Pancreas (tissue), 10 donors: ENCODE measurements at regions of chr13 and their contacts with region 1.

Region 1: DNA sequence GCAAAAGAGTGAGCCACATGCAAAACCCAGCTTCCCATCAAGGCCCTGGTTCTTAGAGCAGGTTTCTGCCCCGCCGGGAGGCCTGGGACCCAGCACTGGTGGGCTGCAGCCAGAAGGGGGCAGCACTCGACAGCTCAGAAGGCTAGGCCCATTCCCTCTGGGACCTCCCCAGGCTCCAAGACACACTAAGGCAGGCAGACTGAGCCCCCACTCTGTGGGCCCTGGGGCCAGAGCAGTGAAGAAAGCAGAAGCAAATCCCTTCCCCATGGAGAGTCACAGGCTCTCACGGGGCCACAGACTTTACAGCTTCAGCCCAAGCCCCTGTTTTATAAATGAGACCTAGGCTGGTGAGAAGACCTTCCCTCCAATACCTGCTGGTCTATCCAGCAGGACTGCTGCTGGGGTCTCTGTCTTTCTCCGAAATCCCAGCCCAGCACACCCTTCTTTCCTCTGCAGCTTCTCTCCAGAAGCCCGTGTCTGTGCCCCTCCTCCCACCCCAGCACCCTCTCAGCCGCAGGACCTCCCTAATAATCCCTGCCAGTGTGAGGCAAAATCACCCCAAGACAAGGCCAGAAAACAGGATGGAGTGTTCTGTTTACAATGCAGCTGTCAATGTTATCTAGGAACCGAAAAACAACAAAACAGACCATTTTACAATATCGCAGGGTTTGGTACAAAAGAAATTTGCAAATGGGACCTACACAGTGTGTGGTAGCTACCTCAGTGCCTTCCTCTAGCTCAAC is 109.3 kb downstream of the ABCC4 start:
- DNase-seq: peak; percentile 30 to 88 (median 72)
- ATAC-seq: peak; percentile 57 to 87 (median 82)
- H3K4me3 ChIP-seq: no peak overlapping the region
- H3K27ac ChIP-seq: no peak overlapping the region
- H3K4me1 ChIP-seq: no peaks in the 10 kb centered on the region
- H3K27me3 ChIP-seq: no peaks in the 10 kb centered on the region
- CTCF ChIP-seq: peak; percentile 47 to 88 (median 71)

Region 2: DNA sequence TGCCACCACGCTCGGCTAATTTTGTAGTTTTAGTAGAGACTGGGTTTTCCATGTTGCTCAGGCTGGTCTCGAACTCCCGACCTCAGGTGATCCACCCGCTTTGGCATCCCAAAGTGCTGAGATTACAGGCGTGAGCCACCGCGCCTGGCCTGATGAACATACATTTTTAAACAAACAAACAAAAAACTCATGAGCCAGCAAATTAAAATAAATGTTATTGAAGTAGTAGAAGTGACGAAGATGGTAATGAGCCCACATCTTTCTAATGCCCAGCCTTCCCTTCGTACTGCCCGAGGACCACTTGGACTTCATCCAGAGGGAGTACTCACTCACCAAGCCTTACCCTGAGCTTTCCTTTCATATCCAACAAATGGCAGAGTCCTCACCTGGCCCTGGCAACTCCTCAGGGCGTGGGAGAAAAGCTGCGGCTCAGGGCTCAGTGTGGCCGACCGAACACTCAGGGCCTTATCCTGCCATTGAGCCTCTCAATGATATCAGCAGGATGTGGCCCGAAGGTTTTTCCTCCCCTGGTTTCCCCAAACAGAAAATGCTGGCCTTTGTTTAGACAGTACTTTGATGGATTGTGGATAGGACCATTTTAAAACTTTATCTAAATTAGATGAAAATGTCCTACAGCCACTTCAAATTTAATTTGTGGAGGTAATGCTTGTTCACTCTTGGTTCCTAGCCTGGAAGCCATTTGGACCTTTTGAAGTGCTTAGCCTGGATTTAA is 132.1 kb after region 1 on chr13:
- intact Hi-C with region 1: no loop called
- DNase-seq: no peak
- ATAC-seq: no peak
- H3K4me3 ChIP-seq: no peak overlapping the region
- H3K27ac ChIP-seq: no peak overlapping the region
- H3K4me1 ChIP-seq: no peaks in the 10 kb centered on the region
- H3K27me3 ChIP-seq: no peaks in the 10 kb centered on the region
- CTCF ChIP-seq: no peak

Region 3: GRCh38 chr13:95378603-95379002 is 186.6 kb after region 1 on chr13:
- intact Hi-C with region 1: loop called in 2 of 3 experiments (anchors 5 kb)
- DNase-seq: no peak
- ATAC-seq: no peak
- H3K4me3 ChIP-seq: no peak overlapping the region
- H3K27ac ChIP-seq: no peak overlapping the region
- H3K4me1 ChIP-seq: peaks cover 0 to 5% (median 0%) of the 10 kb centered on the region in 3 donors
- H3K27me3 ChIP-seq: no peaks in the 10 kb centered on the region
- CTCF ChIP-seq: no peak

Region 4: GRCh38 chr13:95403828-95404522 is 212.0 kb after region 1 on chr13:
- intact Hi-C with region 1: loop called in 2 of 3 experiments (anchors 5 to 10 kb)
- DNase-seq: peak; percentile 76 to 91 (median 86)
- ATAC-seq: peak; percentile 94 to 99 (median 98)
- H3K4me3 ChIP-seq: peak overlapping the region in 2 of 4 donors; percentile 3 to 28
- H3K27ac ChIP-seq: no peak overlapping the region
- H3K4me1 ChIP-seq: no peaks in the 10 kb centered on the region
- H3K27me3 ChIP-seq: no peaks in the 10 kb centered on the region
- CTCF ChIP-seq: peak; percentile 80 to 94 (median 88)